Activated CD4-positive, alpha-beta T cell treated with anti-CD3 and anti-CD28 coated beads for 36 hours (primary cell): ENCODE measurements at regions of chr3 and their contacts with region 1.

Region 1: DNA sequence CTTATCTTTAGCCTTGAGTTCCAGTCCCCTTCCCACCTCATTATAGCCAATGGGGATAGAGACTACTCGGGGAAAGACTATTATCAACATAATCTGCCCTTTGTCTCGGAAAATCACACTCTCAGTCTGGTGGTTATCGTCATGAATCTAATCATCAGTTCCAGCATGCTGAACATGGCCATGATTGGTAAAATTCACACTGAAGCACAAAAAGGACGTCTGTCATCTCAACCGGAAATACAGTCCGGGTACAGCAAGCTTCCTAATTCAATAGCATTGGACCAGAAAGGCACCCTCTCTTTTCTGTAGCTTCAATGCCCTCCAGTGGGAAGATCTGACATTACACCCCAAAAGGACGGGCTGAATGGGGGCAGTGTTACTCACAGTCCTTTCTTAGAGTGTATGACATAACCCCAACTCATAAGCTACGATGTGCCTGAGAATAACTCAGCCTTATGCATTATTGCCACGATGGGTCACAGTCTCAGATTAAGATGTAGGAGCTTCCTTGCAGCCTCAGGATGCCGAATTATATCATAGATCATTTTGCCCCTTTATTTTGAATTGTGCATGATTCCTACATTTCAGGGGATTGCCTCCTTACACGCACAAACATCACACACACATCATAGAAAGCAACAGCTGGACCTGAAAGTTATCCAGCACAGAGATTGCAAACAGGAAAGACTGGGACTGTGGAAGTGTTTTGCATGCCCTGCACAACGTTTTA is 390.4 kb upstream of the LMCD1 start:
- DNase-seq: peak; percentile 75
- ATAC-seq: peak; percentile 98
- H3K4me3 Mint-ChIP-seq: peak overlapping the region; percentile 37
- H3K27ac Mint-ChIP-seq: peak overlapping the region; percentile 35
- H3K4me1 Mint-ChIP-seq: peaks cover 2% of the 10 kb centered on the region
- H3K27me3 Mint-ChIP-seq: no peaks in the 10 kb centered on the region

Region 2: GRCh38 chr3:7382293-7383010 is 728.8 kb before region 1 on chr3:
- CTCF ChIA-PET with region 1: no interaction called
- POLR2A ChIA-PET with region 1: no interaction called
- intact Hi-C with region 1: loop called in 1 of 2 experiments (anchors 10 kb)
- DNase-seq: no peak
- ATAC-seq: no peak
- H3K4me3 Mint-ChIP-seq: no peak overlapping the region
- H3K27ac Mint-ChIP-seq: no peak overlapping the region
- H3K4me1 Mint-ChIP-seq: no peaks in the 10 kb centered on the region
- H3K27me3 Mint-ChIP-seq: no peaks in the 10 kb centered on the region

Region 3: DNA sequence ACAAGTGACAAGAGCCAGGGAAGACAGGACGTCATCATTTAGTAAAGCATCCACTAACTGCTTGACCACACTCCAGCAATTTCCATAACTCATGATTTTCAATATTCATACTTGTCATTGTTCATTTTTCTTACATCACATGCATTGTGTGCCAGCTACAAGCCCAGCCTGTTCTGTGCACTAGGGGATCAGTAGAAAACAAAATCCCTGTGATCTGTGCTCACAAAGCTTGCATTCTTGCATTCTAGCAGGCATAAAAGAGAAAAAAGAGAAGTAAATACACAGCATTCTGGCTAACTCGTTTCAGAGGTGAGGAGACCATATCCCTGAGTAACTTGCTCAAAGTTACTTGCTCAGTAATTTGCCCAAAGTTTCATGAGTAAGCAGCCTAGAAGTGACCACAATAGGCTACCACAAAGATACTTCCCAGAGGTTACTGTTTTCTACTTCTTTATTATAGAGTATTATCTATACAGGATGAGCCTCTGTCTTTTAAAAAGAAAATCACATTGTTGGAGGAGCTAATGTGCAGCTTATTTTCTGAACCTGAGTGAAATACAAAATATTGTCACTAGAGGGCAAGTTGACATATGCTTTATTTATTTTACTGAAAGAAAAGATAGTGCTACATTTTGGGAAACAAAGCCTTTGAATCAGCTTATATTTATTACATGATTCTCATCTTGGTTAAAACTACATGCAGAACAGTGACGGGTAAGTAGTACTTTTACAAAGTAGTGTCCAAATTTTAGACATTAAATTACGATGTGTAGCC is 311.0 kb before region 1 on chr3:
- CTCF ChIA-PET with region 1: interaction called, 3 read pairs
- POLR2A ChIA-PET with region 1: no interaction called
- intact Hi-C with region 1: loop called (anchors 1 to 10 kb)
- DNase-seq: no peak
- ATAC-seq: no peak
- H3K4me3 Mint-ChIP-seq: no peak overlapping the region
- H3K27ac Mint-ChIP-seq: no peak overlapping the region
- H3K4me1 Mint-ChIP-seq: no peaks in the 10 kb centered on the region
- H3K27me3 Mint-ChIP-seq: no peaks in the 10 kb centered on the region